Naive thymus-derived CD4-positive, alpha-beta T cell (primary cell): ENCODE measurements at regions of chr3 and their contacts with region 1.

Region 1: GRCh38 chr3:138186803-138187295 is 252 bp upstream of the ARMC8 start:
- DNase-seq: peak; percentile 83 to 91 (median 87)
- ATAC-seq: peak; percentile 96
- H3K4me3 ChIP-seq: peak overlapping the region; percentile 98
- H3K4me3 Mint-ChIP-seq: peak overlapping the region; percentile 89 to 99 (median 97)
- H3K27ac ChIP-seq: peak overlapping the region; percentile 86
- H3K27ac Mint-ChIP-seq: peak overlapping the region; percentile 92 to 96 (median 93)
- H3K4me1 ChIP-seq: peaks cover 13 to 24% of the 10 kb centered on the region in 2 donors
- H3K4me1 Mint-ChIP-seq: peaks cover 32 to 54% (median 45%) of the 10 kb centered on the region in 7 donors
- H3K27me3 ChIP-seq: no peaks in the 10 kb centered on the region
- H3K27me3 Mint-ChIP-seq: peaks cover 0 to 19% (median 9%) of the 10 kb centered on the region in 5 donors

Region 2: DNA sequence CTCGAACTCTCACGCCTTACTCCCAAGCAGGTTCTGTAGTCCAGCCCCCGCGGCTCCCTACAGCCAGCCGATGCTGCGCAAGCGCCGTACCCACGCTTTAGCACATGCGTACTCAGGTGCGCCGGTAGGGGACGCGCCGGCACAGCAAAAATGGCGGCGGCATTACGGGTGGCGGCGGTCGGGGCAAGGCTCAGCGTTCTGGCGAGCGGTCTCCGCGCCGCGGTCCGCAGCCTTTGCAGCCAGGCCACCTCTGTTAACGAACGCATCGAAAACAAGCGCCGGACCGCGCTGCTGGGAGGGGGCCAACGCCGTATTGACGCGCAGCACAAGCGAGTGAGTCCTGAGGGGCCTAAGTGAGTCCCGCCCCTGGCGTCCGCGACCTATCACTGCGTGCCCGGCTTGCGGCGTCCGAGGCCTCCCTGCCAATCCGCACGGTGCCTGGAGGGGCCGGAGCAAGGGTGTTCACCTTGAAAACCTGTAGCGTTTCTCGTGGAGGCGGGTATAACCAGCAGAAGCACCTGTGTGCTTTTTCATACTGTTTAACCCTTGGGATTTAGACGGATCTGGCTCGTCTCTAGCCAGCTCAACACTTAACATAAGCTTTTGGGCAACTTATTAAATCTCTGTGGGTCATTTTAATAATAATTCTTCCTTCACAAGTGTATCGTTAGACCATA is 1936.5 kb before region 1 on chr3 and contains the start of gene PCCB:
- CTCF ChIA-PET with region 1: no interaction called
- POLR2A ChIA-PET with region 1: no interaction called
- intact Hi-C with region 1: loop called in 1 of 2 experiments (anchors 10 kb)
- DNase-seq: peak; percentile 86 to 95 (median 93)
- ATAC-seq: peak; percentile 99
- H3K4me3 ChIP-seq: peak within 1 kb of the TSS; percentile 80
- H3K4me3 Mint-ChIP-seq: peak within 1 kb of the TSS; percentile 79 to 94 (median 90)
- H3K27ac ChIP-seq: peak within 1 kb of the TSS; percentile 80
- H3K27ac Mint-ChIP-seq: peak within 1 kb of the TSS; percentile 91 to 96 (median 93)
- H3K4me1 ChIP-seq: peaks cover 9% of the 10 kb centered on the region in 2 donors
- H3K4me1 Mint-ChIP-seq: peaks cover 12 to 30% (median 21%) of the 10 kb centered on the region in 7 donors
- H3K27me3 ChIP-seq: no peaks in the 10 kb centered on the region
- H3K27me3 Mint-ChIP-seq: no peaks in the 10 kb centered on the region
- total RNA-seq, gene PCCB: 13.6 to 22.6 (median 16.6) TPM

Region 3: DNA sequence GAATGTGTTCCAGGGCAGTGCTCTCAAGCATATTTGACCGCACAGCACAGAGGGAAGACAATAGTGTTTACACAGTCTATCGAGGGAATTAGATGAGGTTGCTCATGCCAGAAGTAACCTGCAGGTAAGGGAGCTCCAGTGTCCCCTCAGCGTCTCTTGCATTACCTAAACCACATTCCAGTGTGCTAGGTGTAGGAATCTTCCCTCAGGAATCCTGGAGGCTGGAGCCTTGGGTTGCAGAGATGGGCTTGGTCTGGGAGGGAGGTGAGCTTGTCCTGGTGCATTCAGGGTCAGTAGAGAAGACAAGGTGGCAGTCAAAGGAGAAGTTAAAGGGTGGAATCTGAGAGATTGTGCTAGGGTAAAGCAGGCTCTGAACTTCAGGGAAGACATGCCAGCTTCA is 366.5 kb before region 1 on chr3:
- CTCF ChIA-PET with region 1: no interaction called
- POLR2A ChIA-PET with region 1: no interaction called
- intact Hi-C with region 1: no loop called
- DNase-seq: no peak
- ATAC-seq: no peak
- H3K4me3 ChIP-seq: no peak overlapping the region
- H3K4me3 Mint-ChIP-seq: no peak overlapping the region
- H3K27ac ChIP-seq: no peak overlapping the region
- H3K27ac Mint-ChIP-seq: no peak overlapping the region
- H3K4me1 ChIP-seq: no peaks in the 10 kb centered on the region
- H3K4me1 Mint-ChIP-seq: no peaks in the 10 kb centered on the region
- H3K27me3 ChIP-seq: no peaks in the 10 kb centered on the region
- H3K27me3 Mint-ChIP-seq: peaks cover 0 to 10% (median 5%) of the 10 kb centered on the region in 5 donors

Region 4: DNA sequence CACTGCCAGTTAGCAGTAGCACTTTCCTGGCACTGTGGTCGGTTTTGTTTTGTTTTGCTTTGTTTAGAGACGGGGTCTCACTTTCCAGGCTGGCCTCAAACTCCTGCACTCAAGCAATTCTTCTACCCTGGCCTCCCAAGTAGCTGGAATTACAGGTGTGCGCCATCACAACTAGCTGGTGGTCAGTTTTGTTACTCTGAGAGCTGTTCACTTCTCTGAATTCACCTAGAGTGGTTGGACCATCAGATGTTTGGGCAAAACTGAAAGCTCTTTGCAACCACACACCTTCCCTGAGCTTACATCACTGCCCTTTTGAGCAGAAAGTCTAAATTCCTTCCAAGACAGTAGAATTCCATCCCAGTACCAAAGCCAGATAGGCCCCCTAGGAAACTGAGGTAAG is 154.3 kb before region 1 on chr3:
- CTCF ChIA-PET with region 1: no interaction called
- POLR2A ChIA-PET with region 1: no interaction called
- intact Hi-C with region 1: no loop called
- DNase-seq: no peak
- ATAC-seq: no peak
- H3K4me3 ChIP-seq: no peak overlapping the region
- H3K4me3 Mint-ChIP-seq: no peak overlapping the region
- H3K27ac ChIP-seq: no peak overlapping the region
- H3K27ac Mint-ChIP-seq: no peak overlapping the region
- H3K4me1 ChIP-seq: no peaks in the 10 kb centered on the region
- H3K4me1 Mint-ChIP-seq: peaks cover 0 to 1% (median 0%) of the 10 kb centered on the region in 7 donors
- H3K27me3 ChIP-seq: peaks cover 0 to 4% of the 10 kb centered on the region in 2 donors
- H3K27me3 Mint-ChIP-seq: peaks cover 7 to 24% (median 14%) of the 10 kb centered on the region in 5 donors

Region 5: DNA sequence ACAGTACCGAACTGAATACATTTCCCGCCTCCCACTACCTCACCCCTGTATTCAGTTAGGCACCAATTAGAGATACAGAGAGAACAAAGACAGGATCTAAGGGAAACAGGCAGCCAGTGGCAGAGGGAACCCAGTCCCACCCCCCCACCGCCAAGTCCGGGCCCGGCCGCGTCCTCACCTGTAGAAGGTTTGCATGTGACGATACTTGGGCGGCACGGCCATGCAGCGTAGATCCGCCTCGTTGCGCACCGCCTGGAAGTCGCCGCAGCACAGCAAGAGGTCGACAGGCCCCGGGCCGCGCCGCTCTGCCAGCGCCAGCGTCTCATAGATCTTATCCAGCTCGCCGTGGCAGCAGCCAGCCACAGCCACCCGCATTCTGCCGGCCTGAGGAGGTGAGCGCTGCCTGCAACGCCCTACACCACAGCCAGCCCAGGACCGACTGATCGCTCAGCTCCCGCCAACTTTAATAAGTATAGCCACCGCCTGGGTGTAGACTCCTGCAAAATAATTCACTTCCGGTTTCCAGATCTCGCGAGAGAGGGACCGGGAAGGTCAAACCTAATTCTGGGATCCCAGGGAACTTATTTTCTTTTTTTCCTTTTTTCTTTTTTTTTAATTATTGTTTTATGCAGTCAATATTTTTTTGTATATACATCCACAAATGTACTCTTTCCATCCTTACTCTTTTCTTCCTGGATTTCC is 12.3 kb before region 1 on chr3 and contains the start of gene DBR1:
- CTCF ChIA-PET with region 1: interaction called, 3 read pairs
- POLR2A ChIA-PET with region 1: interaction called, 46 read pairs
- intact Hi-C with region 1: loop called (anchors 1 kb)
- DNase-seq: peak; percentile 51 to 81 (median 74)
- ATAC-seq: peak; percentile 91
- H3K4me3 ChIP-seq: peak within 1 kb of the TSS; percentile 79
- H3K4me3 Mint-ChIP-seq: peak within 1 kb of the TSS; percentile 87 to 99 (median 98)
- H3K27ac ChIP-seq: peak within 1 kb of the TSS; percentile 80
- H3K27ac Mint-ChIP-seq: peak within 1 kb of the TSS; percentile 96 to 99 (median 97)
- H3K4me1 ChIP-seq: peaks cover 20 to 22% of the 10 kb centered on the region in 2 donors
- H3K4me1 Mint-ChIP-seq: peaks cover 22 to 56% (median 45%) of the 10 kb centered on the region in 7 donors
- H3K27me3 ChIP-seq: no peaks in the 10 kb centered on the region
- H3K27me3 Mint-ChIP-seq: peaks cover 0 to 9% (median 0%) of the 10 kb centered on the region in 5 donors
- total RNA-seq, gene DBR1: 15.4 to 28.2 (median 20.8) TPM

Region 6: GRCh38 chr3:138230525-138230924 is 43.7 kb after region 1 on chr3:
- CTCF ChIA-PET with region 1: no interaction called
- POLR2A ChIA-PET with region 1: interaction called, 3 read pairs
- intact Hi-C with region 1: loop called in 1 of 2 experiments (anchors 5 kb)
- DNase-seq: no peak
- ATAC-seq: no peak
- H3K4me3 ChIP-seq: no peak overlapping the region
- H3K4me3 Mint-ChIP-seq: no peak overlapping the region
- H3K27ac ChIP-seq: no peak overlapping the region
- H3K27ac Mint-ChIP-seq: peak overlapping the region in 1 of 9 donors; percentile 51
- H3K4me1 ChIP-seq: no peaks in the 10 kb centered on the region
- H3K4me1 Mint-ChIP-seq: peaks cover 0 to 9% (median 2%) of the 10 kb centered on the region in 7 donors
- H3K27me3 ChIP-seq: no peaks in the 10 kb centered on the region
- H3K27me3 Mint-ChIP-seq: no peaks in the 10 kb centered on the region

Region 7: GRCh38 chr3:138271189-138271794 is 84.4 kb after region 1 on chr3:
- CTCF ChIA-PET with region 1: interaction called, 3 read pairs
- POLR2A ChIA-PET with region 1: no interaction called
- intact Hi-C with region 1: loop called in 1 of 2 experiments (anchors 5 kb)
- DNase-seq: no peak
- ATAC-seq: no peak
- H3K4me3 ChIP-seq: no peak overlapping the region
- H3K4me3 Mint-ChIP-seq: no peak overlapping the region
- H3K27ac ChIP-seq: no peak overlapping the region
- H3K27ac Mint-ChIP-seq: peak overlapping the region in 3 of 9 donors; percentile 0 to 47 (median 32)
- H3K4me1 ChIP-seq: no peaks in the 10 kb centered on the region
- H3K4me1 Mint-ChIP-seq: peaks cover 0 to 6% (median 0%) of the 10 kb centered on the region in 7 donors
- H3K27me3 ChIP-seq: no peaks in the 10 kb centered on the region
- H3K27me3 Mint-ChIP-seq: no peaks in the 10 kb centered on the region

Region 8: DNA sequence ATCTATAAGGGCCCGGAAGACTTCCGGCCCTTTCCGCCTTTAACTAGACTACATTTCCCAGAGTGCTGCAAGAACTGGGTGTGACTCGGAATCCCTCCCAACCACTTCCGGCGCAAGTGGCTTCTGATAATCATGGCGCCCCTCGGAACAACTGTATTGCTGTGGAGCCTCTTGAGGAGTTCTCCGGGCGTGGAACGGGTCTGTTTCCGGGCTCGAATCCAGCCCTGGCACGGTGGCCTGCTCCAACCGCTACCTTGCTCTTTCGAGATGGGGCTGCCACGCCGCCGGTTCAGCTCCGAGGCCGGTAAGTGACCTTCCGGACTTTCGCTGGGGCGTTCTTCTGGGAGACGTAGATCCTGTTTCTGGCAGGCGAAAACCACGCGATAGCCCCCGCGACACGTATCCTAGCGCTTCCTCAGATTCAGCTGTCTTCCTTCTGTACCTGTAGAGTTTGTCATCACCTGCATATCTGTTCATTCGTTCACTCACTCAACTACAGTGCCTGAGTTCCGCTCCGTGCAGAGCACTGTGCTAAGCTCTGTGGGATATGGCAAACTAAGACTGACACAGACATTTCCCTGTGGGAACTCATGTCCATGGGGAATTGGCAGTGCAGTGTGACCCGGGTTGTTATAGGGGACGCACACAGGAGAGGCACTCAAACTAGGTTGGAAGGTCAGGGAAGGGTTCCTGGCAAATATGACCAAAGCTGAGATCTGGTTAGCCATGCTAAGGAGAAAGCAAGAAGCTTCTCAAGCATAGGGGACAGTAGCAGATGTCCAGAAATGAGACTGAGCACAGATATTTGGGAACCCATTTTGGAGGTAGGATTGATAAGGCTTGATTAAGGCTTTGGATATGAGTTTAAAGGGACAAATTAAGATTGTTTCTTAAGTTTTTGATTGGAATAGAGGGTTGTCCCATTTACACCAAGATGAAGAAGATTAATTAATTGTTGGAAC is 1157.3 kb after region 1 on chr3 and contains the start of gene MRPS22:
- CTCF ChIA-PET with region 1: no interaction called
- POLR2A ChIA-PET with region 1: interaction called, 3 read pairs
- intact Hi-C with region 1: loop called (anchors 5 kb)
- DNase-seq: peak; percentile 52 to 87 (median 85)
- ATAC-seq: peak; percentile 97
- H3K4me3 ChIP-seq: peak within 1 kb of the TSS; percentile 86
- H3K4me3 Mint-ChIP-seq: peak within 1 kb of the TSS in 2 of 10 donors; percentile 59 to 72
- H3K27ac ChIP-seq: peak within 1 kb of the TSS; percentile 88
- H3K27ac Mint-ChIP-seq: peak within 1 kb of the TSS in 3 of 9 donors; percentile 15 to 64 (median 31)
- H3K4me1 ChIP-seq: peaks cover 15% of the 10 kb centered on the region in 2 donors
- H3K4me1 Mint-ChIP-seq: peaks cover 7 to 19% (median 10%) of the 10 kb centered on the region in 7 donors
- H3K27me3 ChIP-seq: no peaks in the 10 kb centered on the region
- H3K27me3 Mint-ChIP-seq: peaks cover 0 to 9% (median 6%) of the 10 kb centered on the region in 5 donors
- total RNA-seq, gene MRPS22: 26.2 to 37.2 (median 36.3) TPM

Region 9: DNA sequence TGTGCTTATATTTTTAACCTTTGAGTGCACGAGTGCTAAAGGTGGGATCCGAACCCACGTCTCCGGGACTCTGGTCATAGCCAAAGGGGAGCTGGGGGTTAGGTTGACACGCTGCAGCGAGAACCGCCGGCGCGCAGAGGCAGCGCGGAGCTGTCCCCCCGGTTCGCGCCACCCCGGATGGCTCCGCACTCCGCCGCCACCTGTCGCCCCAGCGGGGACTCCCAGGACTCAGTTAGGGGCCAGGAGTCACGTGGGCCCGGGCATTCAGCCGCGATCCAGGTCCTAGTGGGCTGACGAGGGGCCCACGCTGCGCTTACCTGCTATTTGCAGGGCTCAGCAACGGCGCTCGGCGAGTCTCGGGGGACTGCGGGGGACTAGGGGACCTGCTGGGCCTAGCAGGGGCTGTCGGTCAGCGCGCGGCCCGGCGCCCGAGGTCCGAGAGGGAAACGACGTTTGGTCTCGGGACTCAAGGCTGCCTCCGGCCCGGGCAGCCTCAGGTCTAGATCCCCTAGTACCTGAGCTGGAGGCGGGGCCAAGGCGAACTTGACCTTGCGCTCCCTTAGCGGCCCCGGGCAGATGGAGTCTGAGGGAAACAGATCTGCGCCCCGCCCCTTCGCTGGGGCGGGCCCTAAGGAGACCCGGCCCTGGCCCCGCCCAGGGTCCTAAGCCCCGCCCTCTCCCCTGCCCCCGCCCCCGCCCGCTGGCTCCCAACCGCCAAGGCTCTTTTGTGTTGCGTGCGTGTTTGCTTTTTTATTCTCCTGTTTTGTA is 1490.7 kb after region 1 on chr3 and contains the start of gene NMNAT3:
- CTCF ChIA-PET with region 1: no interaction called
- POLR2A ChIA-PET with region 1: no interaction called
- intact Hi-C with region 1: loop called in 1 of 2 experiments (anchors 2 kb)
- DNase-seq: peak; percentile 65 to 84 (median 79)
- ATAC-seq: peak; percentile 99
- H3K4me3 ChIP-seq: peak within 1 kb of the TSS; percentile 73
- H3K4me3 Mint-ChIP-seq: peak within 1 kb of the TSS; percentile 76 to 88 (median 86)
- H3K27ac ChIP-seq: peak within 1 kb of the TSS; percentile 78
- H3K27ac Mint-ChIP-seq: peak within 1 kb of the TSS in 6 of 9 donors; percentile 31 to 80 (median 52)
- H3K4me1 ChIP-seq: peaks cover 0 to 7% of the 10 kb centered on the region in 2 donors
- H3K4me1 Mint-ChIP-seq: peaks cover 6 to 23% (median 14%) of the 10 kb centered on the region in 7 donors
- H3K27me3 ChIP-seq: no peaks in the 10 kb centered on the region
- H3K27me3 Mint-ChIP-seq: peaks cover 0 to 14% (median 0%) of the 10 kb centered on the region in 5 donors
- total RNA-seq, gene NMNAT3: 0.56 to 7.4 (median 4.5) TPM